ENCODE measurements at regions of chr1 and their contacts with region 1.

Region 1: DNA sequence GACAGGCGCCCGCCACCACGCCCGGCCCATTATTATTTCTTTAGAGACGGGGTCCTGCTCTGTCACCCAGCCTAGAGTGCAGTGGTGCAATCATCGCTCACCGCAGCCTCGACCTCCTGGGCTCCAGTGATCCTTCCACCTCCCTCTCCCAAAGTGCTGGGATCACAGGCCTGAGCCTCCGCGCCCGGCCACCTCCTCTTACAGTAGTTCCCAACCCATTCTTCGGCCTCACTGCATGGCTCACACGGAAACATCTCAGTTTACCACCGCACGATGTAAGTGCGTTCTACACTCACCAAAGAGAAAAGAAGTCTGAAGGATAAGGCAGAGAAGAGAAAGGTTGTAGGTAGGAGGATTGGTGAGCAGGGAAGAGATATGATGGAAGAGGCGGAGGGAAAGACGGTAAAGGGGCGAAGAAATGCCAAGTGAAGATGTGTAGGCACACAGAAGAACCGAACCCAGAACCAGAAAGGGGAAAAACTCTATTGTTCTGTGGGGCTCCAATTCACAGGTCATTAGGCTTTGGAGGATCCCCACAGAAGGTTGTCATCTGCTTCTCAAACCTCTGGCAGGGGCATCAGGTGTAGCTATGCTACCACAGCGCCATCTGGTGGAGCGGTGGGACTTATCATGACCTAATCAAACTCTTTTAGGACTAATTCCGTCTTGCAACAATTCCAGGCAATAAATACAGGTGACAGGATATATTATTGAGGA is 504.2 kb downstream of the SMYD3 start:
- DNase-seq: peak; percentile 81 to 86
- H3K4me3 ChIP-seq: no peak overlapping the region
- H3K4me3 Mint-ChIP-seq: no peak overlapping the region
- H3K27ac Mint-ChIP-seq: no peak overlapping the region
- H3K4me1 ChIP-seq: peaks cover 8% of the 10 kb centered on the region
- H3K4me1 Mint-ChIP-seq: peaks cover 22% of the 10 kb centered on the region
- H3K27me3 ChIP-seq: no peaks in the 10 kb centered on the region
- H3K27me3 Mint-ChIP-seq: no peaks in the 10 kb centered on the region
- CTCF ChIP-seq: peak; percentile 86 to 91

Region 2: DNA sequence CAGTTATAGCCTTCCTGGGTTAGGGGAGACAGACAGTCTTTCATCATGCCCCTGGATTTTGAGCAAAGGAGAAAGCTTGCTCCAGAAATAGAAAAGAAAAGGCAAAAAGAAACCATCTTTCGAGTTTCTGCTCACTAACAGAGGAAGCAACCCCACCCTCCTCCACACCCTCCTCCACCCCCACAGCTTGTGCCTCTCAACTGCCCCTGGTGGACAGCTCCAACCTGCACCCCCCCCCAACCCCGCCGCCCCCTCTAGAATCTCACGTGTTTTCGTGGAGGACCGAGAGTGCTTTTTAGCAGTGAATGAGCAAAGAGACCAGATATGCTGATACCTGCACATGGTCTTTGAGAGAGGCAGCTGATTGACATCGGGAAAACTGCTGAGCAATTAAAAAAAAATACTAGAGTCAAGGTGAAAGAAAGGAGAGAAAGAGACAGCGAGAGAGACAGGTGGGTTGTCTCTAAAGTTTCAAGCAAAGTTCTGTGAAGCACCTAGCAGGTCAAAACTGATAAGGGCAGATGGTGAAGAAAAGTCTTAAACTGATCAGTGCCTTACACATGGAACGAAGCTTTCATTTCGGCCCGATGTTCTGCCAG is 489.8 kb before region 1 on chr1:
- CTCF ChIA-PET with region 1: no interaction called
- POLR2A ChIA-PET with region 1: no interaction called
- intact Hi-C with region 1: loop called (anchors 10 kb)
- DNase-seq: peak in 1 of 2 experiments; percentile 8
- H3K4me3 ChIP-seq: no peak overlapping the region
- H3K4me3 Mint-ChIP-seq: no peak overlapping the region
- H3K27ac Mint-ChIP-seq: no peak overlapping the region
- H3K4me1 ChIP-seq: no peaks in the 10 kb centered on the region
- H3K4me1 Mint-ChIP-seq: peaks cover 16% of the 10 kb centered on the region
- H3K27me3 ChIP-seq: no peaks in the 10 kb centered on the region
- H3K27me3 Mint-ChIP-seq: no peaks in the 10 kb centered on the region
- CTCF ChIP-seq: no peak

Region 3: DNA sequence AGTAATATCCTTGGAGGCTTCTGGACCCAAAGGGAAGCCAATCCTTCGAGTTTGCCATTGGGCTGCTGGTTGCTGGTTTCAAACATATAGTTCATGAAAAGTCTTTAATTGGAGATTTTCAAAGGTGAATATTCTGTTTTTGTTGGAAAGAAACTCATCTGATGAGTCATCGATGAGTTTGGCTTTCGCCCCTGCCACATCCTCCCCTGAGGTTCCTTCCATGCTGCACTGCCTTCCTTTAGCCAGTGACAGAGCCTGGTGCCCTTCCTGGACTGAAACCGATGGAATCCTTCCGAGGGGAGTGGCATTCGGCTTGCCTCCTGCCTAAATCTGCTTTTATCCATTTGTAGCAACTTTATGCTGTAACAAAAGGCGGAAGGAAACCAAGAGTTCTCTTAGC is 298.1 kb before region 1 on chr1:
- CTCF ChIA-PET with region 1: no interaction called
- POLR2A ChIA-PET with region 1: no interaction called
- intact Hi-C with region 1: loop called (anchors 10 kb)
- DNase-seq: no peak
- H3K4me3 ChIP-seq: no peak overlapping the region
- H3K4me3 Mint-ChIP-seq: no peak overlapping the region
- H3K27ac Mint-ChIP-seq: no peak overlapping the region
- H3K4me1 ChIP-seq: no peaks in the 10 kb centered on the region
- H3K4me1 Mint-ChIP-seq: no peaks in the 10 kb centered on the region
- H3K27me3 ChIP-seq: no peaks in the 10 kb centered on the region
- H3K27me3 Mint-ChIP-seq: no peaks in the 10 kb centered on the region
- CTCF ChIP-seq: no peak

Region 4: GRCh38 chr1:245858722-245859492 is 144.0 kb before region 1 on chr1:
- CTCF ChIA-PET with region 1: no interaction called
- POLR2A ChIA-PET with region 1: no interaction called
- intact Hi-C with region 1: loop called (anchors 1 kb)
- DNase-seq: peak in 1 of 2 experiments; percentile 10
- H3K4me3 ChIP-seq: no peak overlapping the region
- H3K4me3 Mint-ChIP-seq: no peak overlapping the region
- H3K27ac Mint-ChIP-seq: no peak overlapping the region
- H3K4me1 ChIP-seq: peaks cover 4% of the 10 kb centered on the region; the same call in 1 of the 2 replicates
- H3K4me1 Mint-ChIP-seq: peaks cover 18% of the 10 kb centered on the region
- H3K27me3 ChIP-seq: no peaks in the 10 kb centered on the region
- H3K27me3 Mint-ChIP-seq: no peaks in the 10 kb centered on the region
- CTCF ChIP-seq: peak in 1 of 2 experiments; percentile 26

Measured in Caco-2 (cell line).